GM12878 (cell line): ENCODE measurements at regions of chrX and their contacts with region 1.

Region 1: DNA sequence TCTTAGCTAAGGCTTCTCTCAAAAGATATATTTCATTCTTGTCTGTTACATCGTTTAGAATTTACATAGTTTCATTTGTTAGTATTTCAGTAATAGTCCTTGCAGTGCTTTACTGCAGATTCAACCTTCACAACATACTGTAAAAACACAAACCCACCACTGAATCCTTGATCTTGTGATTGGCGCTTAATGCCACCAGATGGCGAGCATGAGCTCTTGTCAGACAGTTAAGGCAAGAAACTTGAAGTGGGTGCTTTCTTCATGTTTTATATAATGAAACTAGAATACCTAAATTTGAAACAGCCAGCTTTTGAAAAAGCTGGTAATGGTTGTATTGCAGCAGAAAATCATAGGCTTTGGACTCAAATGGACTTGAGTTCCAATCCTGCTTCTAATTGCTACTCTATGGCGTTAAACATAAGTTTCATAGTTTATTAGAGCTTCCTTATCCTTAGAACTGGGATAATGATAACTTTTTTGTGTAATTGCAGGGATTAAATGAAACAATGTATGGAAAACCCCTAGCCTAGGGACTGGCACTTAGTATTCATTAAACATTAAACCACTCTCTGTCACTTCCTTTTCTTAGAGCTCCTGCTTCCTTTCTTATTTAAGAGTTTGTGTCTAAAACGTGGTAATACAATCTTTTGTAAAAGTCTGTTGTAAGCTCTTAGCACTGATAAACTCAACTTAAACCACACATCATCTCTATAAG is 95.1 kb downstream of the USP9X start:
- DNase-seq: peak; percentile 59
- ATAC-seq: peak; percentile 83
- H3K4me3 ChIP-seq: 0 out of 2 replicates have a peak overlapping the region, but pooled peaks have one; percentile 8
- H3K27ac ChIP-seq: peak overlapping the region; percentile 45
- H3K4me1 ChIP-seq: peaks cover 18% of the 10 kb centered on the region
- H3K27me3 ChIP-seq: no peaks in the 10 kb centered on the region
- CTCF ChIP-seq: peak; percentile 75 to 87 (median 81)
- EP300 ChIP-seq: 0 out of 4 replicates have a peak, but pooled peaks of 1 of the 2 experiments have one; percentile 16
- POLR2A ChIP-seq: no peak
- RAD21 ChIP-seq: peak; percentile 84

Region 2: DNA sequence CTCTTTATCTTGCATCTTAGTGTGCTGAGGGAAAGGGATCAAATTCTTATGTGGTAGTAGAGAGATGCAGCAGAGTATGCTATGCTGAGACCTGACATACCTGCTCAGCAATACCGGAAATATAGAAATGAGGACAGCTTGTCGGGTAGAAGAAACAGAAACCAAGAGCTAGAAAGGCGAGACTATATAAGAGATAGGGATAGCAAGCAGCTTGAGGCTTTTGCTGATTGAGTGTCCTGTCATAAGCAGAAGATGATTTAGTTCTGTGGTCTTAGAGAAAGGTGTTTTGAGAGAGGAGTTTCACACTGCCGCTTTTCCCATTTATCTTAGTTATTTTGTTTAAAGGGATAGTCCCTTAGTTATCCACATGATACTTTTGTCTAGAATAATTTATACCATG is 63.4 kb before region 1 on chrX:
- CTCF ChIA-PET with region 1: interaction called, 39 read pairs
- POLR2A ChIA-PET with region 1: interaction called, 5 read pairs
- RAD21 ChIA-PET with region 1: interaction called, 7 read pairs
- SMC1A ChIA-PET with region 1: interaction called, 9 read pairs
- in situ Hi-C with region 1: no loop called
- intact Hi-C with region 1: no loop called
- DNase-seq: peak; percentile 71
- ATAC-seq: peak; percentile 78
- H3K4me3 ChIP-seq: 0 out of 2 replicates have a peak overlapping the region, but pooled peaks have one; percentile 26
- H3K27ac ChIP-seq: peak overlapping the region; percentile 65; the same call in 1 of the 2 replicates
- H3K4me1 ChIP-seq: peaks cover 40% of the 10 kb centered on the region
- H3K27me3 ChIP-seq: no peaks in the 10 kb centered on the region
- CTCF ChIP-seq: no peak
- EP300 ChIP-seq: peak in 1 of 2 experiments; percentile 57; a peak in 1 of 4 replicates
- POLR2A ChIP-seq: no peak
- RAD21 ChIP-seq: no peak

Region 3: GRCh38 chrX:41192880-41193279 is 12.5 kb after region 1 on chrX:
- CTCF ChIA-PET with region 1: interaction called, 22 read pairs
- POLR2A ChIA-PET with region 1: interaction called, 3 read pairs
- RAD21 ChIA-PET with region 1: interaction called, 4 read pairs
- SMC1A ChIA-PET with region 1: interaction called, 20 read pairs
- in situ Hi-C with region 1: no loop called
- intact Hi-C with region 1: no loop called
- DNase-seq: no peak
- ATAC-seq: no peak
- H3K4me3 ChIP-seq: no peak overlapping the region
- H3K27ac ChIP-seq: no peak overlapping the region
- H3K4me1 ChIP-seq: no peaks in the 10 kb centered on the region
- H3K27me3 ChIP-seq: no peaks in the 10 kb centered on the region
- CTCF ChIP-seq: no peak
- EP300 ChIP-seq: no peak
- POLR2A ChIP-seq: no peak
- RAD21 ChIP-seq: no peak

Region 4: GRCh38 chrX:41245641-41246040 is 65.3 kb after region 1 on chrX:
- CTCF ChIA-PET with region 1: interaction called, 227 read pairs
- POLR2A ChIA-PET with region 1: interaction called, 7 read pairs
- RAD21 ChIA-PET with region 1: interaction called, 9 read pairs
- SMC1A ChIA-PET with region 1: interaction called, 10 read pairs
- in situ Hi-C with region 1: loop called (anchors 5 kb)
- intact Hi-C with region 1: no loop called
- DNase-seq: no peak
- ATAC-seq: no peak
- H3K4me3 ChIP-seq: no peak overlapping the region
- H3K27ac ChIP-seq: no peak overlapping the region
- H3K4me1 ChIP-seq: no peaks in the 10 kb centered on the region
- H3K27me3 ChIP-seq: no peaks in the 10 kb centered on the region
- CTCF ChIP-seq: no peak
- EP300 ChIP-seq: no peak
- POLR2A ChIP-seq: no peak
- RAD21 ChIP-seq: no peak

Region 5: DNA sequence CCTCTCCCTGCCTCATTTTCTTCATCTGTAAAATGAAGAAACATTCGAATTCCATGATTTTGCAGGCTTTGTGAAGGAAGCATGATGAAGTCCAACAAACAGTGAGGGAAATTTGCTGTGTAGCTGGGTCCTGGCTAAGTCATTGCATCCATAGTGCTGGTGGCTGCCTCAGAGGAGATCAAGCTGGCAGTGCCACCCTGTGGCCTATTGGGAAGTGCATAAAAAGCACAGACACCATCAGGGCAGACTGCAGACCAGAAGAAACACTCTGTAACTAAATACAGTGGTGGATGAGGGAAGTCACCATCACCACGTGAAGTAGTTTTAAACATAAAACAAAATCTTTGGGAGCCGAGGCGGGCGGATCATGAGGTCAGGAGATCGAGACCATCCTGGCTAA is 112.9 kb after region 1 on chrX:
- CTCF ChIA-PET with region 1: interaction called, 12 read pairs
- POLR2A ChIA-PET with region 1: interaction called, 5 read pairs
- RAD21 ChIA-PET with region 1: interaction called, 6 read pairs
- SMC1A ChIA-PET with region 1: no interaction called
- in situ Hi-C with region 1: no loop called
- intact Hi-C with region 1: no loop called
- DNase-seq: no peak
- ATAC-seq: peak; percentile 84
- H3K4me3 ChIP-seq: no peak overlapping the region
- H3K27ac ChIP-seq: no peak overlapping the region
- H3K4me1 ChIP-seq: no peaks in the 10 kb centered on the region
- H3K27me3 ChIP-seq: no peaks in the 10 kb centered on the region; a peak in 1 of 4 replicates
- CTCF ChIP-seq: peak; percentile 17 to 32 (median 22); a peak in 4 of 6 replicates
- EP300 ChIP-seq: no peak
- POLR2A ChIP-seq: no peak
- RAD21 ChIP-seq: no peak